ENCODE measurements at regions of chr18 and their contacts with region 1.

Region 1: GRCh38 chr18:47204908-47205522 is 28.9 kb upstream of the IER3IP1 start:
- DNase-seq: peak; percentile 58
- H3K4me3 Mint-ChIP-seq: no peak overlapping the region
- H3K27ac Mint-ChIP-seq: no peak overlapping the region
- H3K4me1 Mint-ChIP-seq: no peaks in the 10 kb centered on the region
- H3K27me3 Mint-ChIP-seq: peaks cover 4% of the 10 kb centered on the region

Region 2: DNA sequence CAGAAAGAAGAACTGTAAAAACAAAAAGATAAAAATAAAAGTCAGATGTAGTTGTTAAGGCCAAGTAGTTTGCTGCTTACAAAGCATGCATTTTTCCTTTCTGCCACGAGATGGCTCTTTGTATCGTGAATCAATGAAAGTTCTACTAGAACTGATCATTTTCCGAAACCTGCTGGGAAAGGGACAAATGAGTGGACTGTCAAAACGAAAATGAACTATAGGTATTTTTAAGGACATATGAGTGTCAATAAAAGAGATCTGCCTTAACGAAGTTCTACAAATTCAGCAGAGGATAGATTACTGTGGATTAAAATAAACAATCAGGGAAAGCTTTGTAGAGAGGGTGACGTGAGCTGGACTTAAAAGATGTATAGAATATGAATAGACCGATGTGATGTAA is 154.5 kb before region 1 on chr18:
- CTCF ChIA-PET with region 1: interaction called, 16 read pairs
- intact Hi-C with region 1: loop called (anchors 1 kb)
- DNase-seq: peak; percentile 31
- H3K4me3 Mint-ChIP-seq: no peak overlapping the region
- H3K27ac Mint-ChIP-seq: no peak overlapping the region
- H3K4me1 Mint-ChIP-seq: peaks cover 3% of the 10 kb centered on the region
- H3K27me3 Mint-ChIP-seq: peaks cover 3% of the 10 kb centered on the region

Region 3: GRCh38 chr18:47100214-47100831 is 104.7 kb before region 1 on chr18:
- CTCF ChIA-PET with region 1: interaction called, 63 read pairs
- intact Hi-C with region 1: loop called (anchors 1 kb)
- DNase-seq: peak; percentile 83
- H3K4me3 Mint-ChIP-seq: no peak overlapping the region
- H3K27ac Mint-ChIP-seq: no peak overlapping the region
- H3K4me1 Mint-ChIP-seq: no peaks in the 10 kb centered on the region
- H3K27me3 Mint-ChIP-seq: no peaks in the 10 kb centered on the region

Region 4: DNA sequence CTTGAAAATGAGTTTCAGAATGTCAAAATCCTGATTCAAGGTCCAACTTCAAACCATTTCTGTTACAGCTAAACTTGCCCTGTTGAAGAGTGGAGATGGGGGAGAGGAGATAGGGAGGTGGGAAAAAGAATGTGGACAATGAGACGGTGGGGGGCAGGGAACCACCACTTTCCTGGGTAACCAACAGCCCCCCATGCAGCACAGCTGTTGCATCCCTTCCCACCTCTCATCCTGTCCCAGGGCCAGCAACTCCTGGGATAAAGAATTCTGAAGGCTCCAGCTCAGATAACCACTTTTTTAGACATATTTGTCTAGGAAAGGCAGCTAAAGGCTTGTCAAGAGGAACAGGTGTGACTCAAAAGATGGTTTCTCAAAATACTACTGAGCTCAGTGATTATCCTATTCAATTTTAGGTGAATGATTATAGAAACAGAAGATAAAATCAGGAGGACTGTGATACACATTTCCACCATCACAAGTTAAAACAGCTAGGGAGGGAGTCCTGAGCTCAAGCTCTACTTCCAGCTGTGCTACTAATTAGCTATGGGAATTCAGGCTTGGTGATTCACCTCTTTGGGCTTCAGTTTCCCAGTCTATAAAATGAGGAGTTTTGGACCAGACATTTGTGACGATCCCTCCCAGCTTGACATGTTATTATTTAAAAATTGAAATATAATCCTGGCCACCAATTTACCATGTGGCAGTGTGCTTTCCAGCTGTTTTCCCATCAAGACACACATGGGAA is 91.0 kb before region 1 on chr18:
- CTCF ChIA-PET with region 1: interaction called, 12 read pairs
- intact Hi-C with region 1: no loop called
- DNase-seq: no peak
- H3K4me3 Mint-ChIP-seq: no peak overlapping the region
- H3K27ac Mint-ChIP-seq: no peak overlapping the region
- H3K4me1 Mint-ChIP-seq: no peaks in the 10 kb centered on the region
- H3K27me3 Mint-ChIP-seq: no peaks in the 10 kb centered on the region

Region 5: DNA sequence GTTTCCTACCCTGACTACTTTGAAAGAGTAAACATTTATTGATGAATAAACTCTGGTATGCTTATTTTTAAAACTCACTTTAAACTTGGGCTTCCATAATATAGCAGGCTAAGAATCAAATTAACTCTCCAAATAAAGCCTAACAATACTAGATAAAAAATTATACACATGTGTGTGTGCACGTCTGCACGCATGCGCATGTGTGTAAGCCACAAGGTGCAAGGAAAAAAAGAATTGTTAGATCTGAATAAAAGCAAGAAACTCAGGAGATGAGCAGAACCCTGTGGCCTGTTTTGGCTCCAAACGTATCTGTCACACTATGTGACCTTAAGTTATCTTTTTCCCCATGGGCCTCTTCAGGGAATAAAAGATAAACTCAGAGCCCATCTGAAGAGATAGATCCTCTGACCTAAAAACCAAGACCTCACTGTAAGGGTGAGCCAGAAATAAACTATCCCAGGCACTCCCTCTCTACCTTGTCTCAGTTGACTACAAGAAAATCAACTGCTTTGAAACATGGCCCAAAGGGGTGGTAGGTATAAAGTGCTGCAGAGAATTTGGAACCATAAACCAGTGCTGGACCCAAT is 61.0 kb before region 1 on chr18:
- CTCF ChIA-PET with region 1: no interaction called
- intact Hi-C with region 1: no loop called
- DNase-seq: no peak
- H3K4me3 Mint-ChIP-seq: no peak overlapping the region
- H3K27ac Mint-ChIP-seq: no peak overlapping the region
- H3K4me1 Mint-ChIP-seq: peaks cover 22% of the 10 kb centered on the region
- H3K27me3 Mint-ChIP-seq: no peaks in the 10 kb centered on the region

Region 6: DNA sequence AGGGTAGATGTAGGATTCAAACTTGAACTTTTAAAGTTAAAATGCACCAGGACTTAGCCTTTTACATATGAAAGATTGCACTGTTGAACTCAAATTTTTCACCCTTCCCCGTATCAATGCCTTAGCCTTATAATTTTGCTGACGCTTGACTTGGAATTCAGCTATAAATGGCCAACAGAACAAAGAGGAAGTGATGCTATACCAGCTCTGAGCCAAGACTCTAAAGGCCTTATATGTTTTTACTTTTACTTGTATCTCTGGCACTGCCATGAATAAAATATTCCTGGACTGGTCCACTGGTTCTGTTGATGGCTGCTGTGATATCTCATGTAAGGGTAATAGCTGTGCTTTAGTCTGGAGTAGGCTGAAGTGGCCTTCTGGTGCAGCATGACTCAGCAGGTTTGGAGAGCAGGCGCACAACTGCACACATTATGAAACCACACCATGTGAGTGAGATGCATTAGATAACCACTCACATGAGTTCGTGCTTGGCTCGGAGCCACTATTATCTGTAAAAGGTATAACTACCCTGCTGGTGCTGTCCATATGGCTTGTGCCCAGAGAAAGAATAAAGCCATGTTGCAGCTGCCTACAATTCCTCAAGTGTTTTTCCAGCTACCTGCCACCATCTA is 20.5 kb before region 1 on chr18:
- CTCF ChIA-PET with region 1: interaction called, 10 read pairs
- intact Hi-C with region 1: no loop called
- DNase-seq: peak; percentile 27
- H3K4me3 Mint-ChIP-seq: no peak overlapping the region
- H3K27ac Mint-ChIP-seq: no peak overlapping the region
- H3K4me1 Mint-ChIP-seq: no peaks in the 10 kb centered on the region
- H3K27me3 Mint-ChIP-seq: peaks cover 3% of the 10 kb centered on the region

Region 7: DNA sequence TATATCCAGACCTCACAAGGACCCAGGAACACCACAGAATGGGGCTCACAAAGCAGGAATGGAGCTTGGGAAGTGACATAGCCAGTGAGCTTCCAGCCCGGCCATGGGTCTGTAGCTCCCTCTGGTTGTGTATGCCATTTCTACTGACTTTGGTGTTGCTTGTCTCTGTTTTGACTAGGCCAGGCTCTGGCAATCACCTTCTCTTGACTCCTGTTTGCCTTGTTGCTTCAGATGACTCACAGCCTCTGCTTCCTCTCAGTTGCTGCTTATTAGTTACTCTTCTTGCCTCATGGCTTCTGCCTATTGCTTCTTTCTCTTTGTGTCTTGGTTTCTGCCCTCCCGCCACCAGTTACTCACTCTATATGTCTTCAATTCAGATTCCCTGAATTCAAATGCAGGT is 13.1 kb before region 1 on chr18:
- CTCF ChIA-PET with region 1: interaction called, 16 read pairs
- intact Hi-C with region 1: no loop called
- DNase-seq: peak; percentile 21
- H3K4me3 Mint-ChIP-seq: no peak overlapping the region
- H3K27ac Mint-ChIP-seq: no peak overlapping the region
- H3K4me1 Mint-ChIP-seq: peaks cover 2% of the 10 kb centered on the region
- H3K27me3 Mint-ChIP-seq: peaks cover 15% of the 10 kb centered on the region

Region 8: DNA sequence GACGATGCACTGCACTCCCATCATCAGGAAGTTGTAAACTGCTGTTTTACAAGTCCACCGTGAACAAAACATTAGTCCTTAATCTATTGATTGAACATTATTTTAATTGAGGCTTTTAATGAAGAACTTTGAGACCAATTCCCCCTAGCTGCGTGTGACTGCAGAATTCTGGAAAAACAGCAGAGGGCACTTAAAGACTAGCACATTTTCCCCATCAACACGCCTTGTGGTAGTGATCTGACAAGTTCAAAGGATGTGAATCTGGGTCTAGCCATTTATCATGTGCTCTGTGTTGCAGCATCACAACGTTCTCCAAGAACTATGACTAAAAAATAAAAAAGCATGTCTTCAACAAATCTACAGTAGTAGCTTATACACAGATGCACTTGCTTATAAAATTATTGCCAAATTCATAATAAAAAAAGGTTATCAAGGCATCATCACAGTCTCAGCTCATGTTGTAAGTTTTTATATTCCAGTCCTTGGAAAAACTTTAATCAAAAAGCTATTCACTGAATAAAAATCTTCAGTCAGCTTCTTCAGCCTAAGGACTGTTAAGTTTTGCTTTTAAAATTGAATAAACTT is 10.6 kb after region 1 on chr18:
- CTCF ChIA-PET with region 1: interaction called, 24 read pairs
- intact Hi-C with region 1: no loop called
- DNase-seq: peak; percentile 53
- H3K4me3 Mint-ChIP-seq: no peak overlapping the region
- H3K27ac Mint-ChIP-seq: no peak overlapping the region
- H3K4me1 Mint-ChIP-seq: no peaks in the 10 kb centered on the region
- H3K27me3 Mint-ChIP-seq: peaks cover 24% of the 10 kb centered on the region

Region 9: GRCh38 chr18:47323158-47323557 is 118.1 kb after region 1 on chr18:
- CTCF ChIA-PET with region 1: no interaction called
- intact Hi-C with region 1: no loop called
- DNase-seq: no peak
- H3K4me3 Mint-ChIP-seq: no peak overlapping the region
- H3K27ac Mint-ChIP-seq: no peak overlapping the region
- H3K4me1 Mint-ChIP-seq: peaks cover 9% of the 10 kb centered on the region
- H3K27me3 Mint-ChIP-seq: no peaks in the 10 kb centered on the region